BJ (cell line): ENCODE measurements at regions of chr3 and their contacts with region 1.

Region 1: GRCh38 chr3:8888301-8888915 is 74.9 kb downstream of the RAD18 start:
- DNase-seq: peak; percentile 86
- H3K4me3 ChIP-seq: no peak overlapping the region
- H3K27me3 ChIP-seq: no peaks in the 10 kb centered on the region
- CTCF ChIP-seq: no peak

Region 2: GRCh38 chr3:8851719-8852118 is 36.7 kb before region 1 on chr3:
- CTCF ChIA-PET with region 1: interaction called, 10 read pairs
- POLR2A ChIA-PET with region 1: interaction called, 9 read pairs
- DNase-seq: peak; percentile 89
- H3K4me3 ChIP-seq: no peak overlapping the region
- H3K27me3 ChIP-seq: no peaks in the 10 kb centered on the region
- CTCF ChIP-seq: no peak

Region 3: GRCh38 chr3:8869613-8870012 is 18.8 kb before region 1 on chr3:
- CTCF ChIA-PET with region 1: interaction called, 11 read pairs
- POLR2A ChIA-PET with region 1: interaction called, 3 read pairs
- DNase-seq: peak; percentile 90
- H3K4me3 ChIP-seq: no peak overlapping the region
- H3K27me3 ChIP-seq: no peaks in the 10 kb centered on the region
- CTCF ChIP-seq: no peak

Region 4: DNA sequence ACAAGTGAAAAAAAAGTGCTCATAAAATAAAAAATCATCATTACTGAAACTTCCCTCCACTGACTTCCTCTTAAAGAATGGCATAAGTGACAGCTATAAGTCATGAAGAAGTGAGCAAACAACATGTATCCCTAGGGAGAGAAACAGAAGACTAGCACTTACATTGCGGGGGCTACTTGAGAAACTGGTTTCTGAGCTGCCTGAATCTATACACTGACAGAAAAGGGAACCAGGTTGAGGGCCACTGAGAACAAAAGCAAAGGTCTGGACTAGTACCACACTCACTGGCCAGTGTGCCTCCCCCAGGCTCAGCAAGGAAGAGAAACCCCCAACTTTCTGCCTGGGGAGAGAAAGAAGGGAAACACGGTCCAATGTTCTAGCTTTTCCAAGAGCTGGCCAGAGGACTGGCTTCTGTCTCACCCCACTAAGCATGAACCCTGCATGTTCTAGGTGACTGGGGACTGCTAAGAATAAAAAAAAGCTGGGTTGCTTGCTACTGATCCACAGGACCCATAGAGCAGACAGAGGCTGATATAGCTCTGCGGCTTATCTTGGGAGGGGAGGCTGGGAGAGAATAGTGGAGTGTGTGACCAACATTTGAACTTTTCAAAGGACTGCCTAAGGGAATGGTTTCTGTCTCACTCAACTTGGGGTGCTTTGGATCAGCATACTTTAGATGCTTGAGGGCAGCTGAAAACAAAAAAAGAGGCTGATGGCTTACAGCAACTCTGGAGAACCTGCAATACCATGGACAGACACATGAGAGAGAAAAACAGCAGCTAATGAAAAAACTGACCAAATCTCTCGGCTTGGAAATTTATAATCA is 66.7 kb after region 1 on chr3:
- CTCF ChIA-PET with region 1: no interaction called
- POLR2A ChIA-PET with region 1: no interaction called
- DNase-seq: peak; percentile 44
- H3K4me3 ChIP-seq: no peak overlapping the region
- H3K27me3 ChIP-seq: no peaks in the 10 kb centered on the region
- CTCF ChIP-seq: peak; percentile 37